Activated B cell treated with CpG ODN at 0.5 μM for 24 hours (primary cell): ENCODE measurements at regions of chr7 and their contacts with region 1.

Region 1: DNA sequence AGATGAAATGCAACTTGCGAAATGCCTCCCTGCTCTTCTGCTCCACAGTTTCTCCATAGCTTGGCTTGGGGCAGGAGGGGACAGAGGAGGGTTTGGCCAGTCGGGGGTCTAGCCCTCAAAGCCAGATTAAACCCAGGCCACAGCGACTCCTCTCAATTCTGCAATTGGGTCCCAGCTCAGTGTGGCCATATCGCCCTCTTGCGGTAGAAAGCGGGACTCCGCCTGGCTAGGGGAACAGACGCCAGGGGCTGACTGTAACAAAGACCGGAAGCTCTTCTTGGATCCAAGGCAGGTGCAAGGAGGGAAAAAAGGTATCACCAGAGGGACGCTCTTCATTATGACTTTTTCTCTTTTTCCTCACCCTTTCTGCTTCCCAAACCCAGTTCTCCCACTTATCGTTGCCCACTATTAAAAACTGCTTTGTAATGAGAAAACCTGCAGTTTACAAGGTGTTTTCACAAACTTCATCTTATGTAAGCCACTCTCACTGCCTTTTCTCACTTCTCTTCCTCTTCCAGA is 36.6 kb upstream of the TNPO3 start:
- DNase-seq: peak; percentile 90
- ATAC-seq: peak; percentile 85
- H3K4me3 Mint-ChIP-seq: peak overlapping the region; percentile 36
- H3K27ac Mint-ChIP-seq: peak overlapping the region; percentile 79
- H3K4me1 Mint-ChIP-seq: peaks cover 40% of the 10 kb centered on the region
- H3K27me3 Mint-ChIP-seq: no peaks in the 10 kb centered on the region
- CTCF ChIP-seq: peak; percentile 60

Region 2: DNA sequence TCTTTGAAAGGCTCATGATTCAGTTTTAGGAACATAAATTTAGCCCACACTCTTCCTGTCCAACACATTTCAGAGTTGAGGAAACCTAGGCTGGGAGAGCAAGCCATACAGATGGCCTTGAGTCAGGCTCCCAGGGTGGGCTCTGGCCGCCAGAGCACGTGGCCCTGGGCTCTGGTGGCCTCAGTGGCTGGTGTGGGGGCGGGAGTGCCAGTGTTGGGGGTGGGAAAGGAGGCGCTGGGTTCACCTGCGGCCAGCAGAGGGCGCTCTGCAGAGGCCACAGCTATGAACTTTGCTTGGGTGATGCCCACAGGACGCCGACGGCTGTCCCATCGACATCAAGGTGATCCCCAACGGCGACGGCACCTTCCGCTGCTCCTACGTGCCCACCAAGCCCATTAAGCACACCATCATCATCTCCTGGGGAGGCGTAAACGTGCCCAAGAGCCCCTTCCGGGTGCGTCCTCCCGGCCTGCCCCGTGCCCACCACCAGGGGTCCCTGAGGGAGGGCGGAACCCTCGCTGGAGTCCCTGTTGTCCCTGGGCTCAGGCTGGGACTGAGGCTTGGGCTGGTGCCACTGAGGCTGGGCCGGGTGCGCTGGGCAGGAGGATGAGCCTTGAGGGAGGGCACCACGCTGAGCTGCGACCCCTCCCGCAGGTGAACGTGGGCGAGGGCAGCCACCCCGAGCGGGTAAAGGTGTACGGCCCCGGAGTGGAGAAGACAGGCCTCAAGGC is 249.5 kb before region 1 on chr7:
- CTCF ChIA-PET with region 1: interaction called, 4 read pairs
- POLR2A ChIA-PET with region 1: no interaction called
- intact Hi-C with region 1: loop called (anchors 1 kb)
- DNase-seq: peak; percentile 49
- ATAC-seq: peak; percentile 67
- H3K4me3 Mint-ChIP-seq: no peak overlapping the region
- H3K27ac Mint-ChIP-seq: no peak overlapping the region
- H3K4me1 Mint-ChIP-seq: peaks cover 4% of the 10 kb centered on the region
- H3K27me3 Mint-ChIP-seq: peaks cover 2% of the 10 kb centered on the region
- CTCF ChIP-seq: peak; percentile 29

Region 3: DNA sequence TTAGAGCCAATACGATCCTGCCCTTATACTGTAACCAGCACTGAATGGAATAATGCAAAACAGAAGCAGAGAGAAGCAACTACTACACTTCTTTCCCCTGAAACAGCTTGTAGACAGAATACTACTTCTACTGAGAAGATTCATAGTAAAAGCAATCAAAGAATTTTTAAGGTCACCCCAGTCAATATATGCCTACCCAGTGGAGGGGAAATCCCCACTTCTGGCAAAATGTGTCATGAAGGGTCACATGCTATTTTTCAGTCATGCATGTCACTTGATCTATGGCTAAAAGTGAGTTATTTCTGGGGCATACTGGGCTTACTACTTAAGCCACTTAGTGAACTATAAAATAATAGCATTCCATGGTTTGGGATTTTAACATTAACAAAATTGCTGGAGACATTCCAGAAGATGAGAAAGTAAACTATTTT is 128.2 kb before region 1 on chr7:
- CTCF ChIA-PET with region 1: interaction called, 5 read pairs
- POLR2A ChIA-PET with region 1: interaction called, 3 read pairs
- intact Hi-C with region 1: loop called (anchors 2 kb)
- DNase-seq: no peak
- ATAC-seq: peak; percentile 91
- H3K4me3 Mint-ChIP-seq: peak overlapping the region; percentile 57
- H3K27ac Mint-ChIP-seq: peak overlapping the region; percentile 86
- H3K4me1 Mint-ChIP-seq: peaks cover 37% of the 10 kb centered on the region
- H3K27me3 Mint-ChIP-seq: no peaks in the 10 kb centered on the region
- CTCF ChIP-seq: no peak

Region 4: DNA sequence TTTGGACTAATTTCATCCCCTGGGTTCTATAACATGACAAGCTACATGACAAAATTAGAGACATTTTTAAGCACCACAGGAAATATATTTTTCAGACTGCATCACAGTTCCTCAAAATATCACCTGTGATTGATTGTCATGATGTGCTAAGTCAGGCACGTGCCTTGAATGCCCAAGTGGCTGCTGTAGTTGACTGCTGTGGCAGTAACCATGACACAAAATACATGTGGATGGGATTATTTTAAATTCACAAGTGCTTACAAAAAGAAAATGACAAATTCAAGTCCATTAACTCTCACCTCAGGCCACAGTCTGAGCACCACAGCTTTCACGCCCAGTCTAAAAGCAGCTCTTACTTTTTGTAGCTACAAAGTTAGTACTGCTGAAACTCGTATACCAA is 82.1 kb before region 1 on chr7:
- CTCF ChIA-PET with region 1: interaction called, 3 read pairs
- POLR2A ChIA-PET with region 1: no interaction called
- intact Hi-C with region 1: loop called (anchors 1 kb)
- DNase-seq: no peak
- ATAC-seq: peak; percentile 86
- H3K4me3 Mint-ChIP-seq: peak overlapping the region; percentile 17
- H3K27ac Mint-ChIP-seq: peak overlapping the region; percentile 82
- H3K4me1 Mint-ChIP-seq: peaks cover 43% of the 10 kb centered on the region
- H3K27me3 Mint-ChIP-seq: no peaks in the 10 kb centered on the region
- CTCF ChIP-seq: no peak

Region 5: DNA sequence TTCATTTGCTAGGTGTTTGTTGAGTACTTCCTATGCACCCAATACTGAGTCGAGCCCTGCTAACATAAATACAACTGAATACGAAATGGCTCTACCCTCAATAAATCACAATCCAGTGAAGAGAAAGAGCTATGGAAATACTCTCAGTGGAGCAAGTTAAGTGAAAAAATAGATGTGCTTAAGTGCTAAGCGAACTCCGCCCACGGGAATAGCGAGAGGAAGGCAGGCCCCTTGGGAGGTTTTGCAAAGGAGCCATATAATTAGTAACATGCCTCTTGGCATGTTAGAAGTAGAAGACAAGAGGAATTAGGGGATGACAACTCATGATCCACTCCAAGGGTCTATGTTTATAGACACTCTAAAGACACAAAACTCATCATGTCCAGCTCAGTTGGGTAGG is 10.2 kb after region 1 on chr7:
- CTCF ChIA-PET with region 1: interaction called, 18 read pairs
- POLR2A ChIA-PET with region 1: no interaction called
- intact Hi-C with region 1: no loop called
- DNase-seq: no peak
- ATAC-seq: no peak
- H3K4me3 Mint-ChIP-seq: no peak overlapping the region
- H3K27ac Mint-ChIP-seq: no peak overlapping the region
- H3K4me1 Mint-ChIP-seq: peaks cover 21% of the 10 kb centered on the region
- H3K27me3 Mint-ChIP-seq: no peaks in the 10 kb centered on the region
- CTCF ChIP-seq: no peak

Region 6: GRCh38 chr7:129136887-129137642 is 45.5 kb after region 1 on chr7:
- CTCF ChIA-PET with region 1: interaction called, 7 read pairs
- POLR2A ChIA-PET with region 1: interaction called, 10 read pairs
- intact Hi-C with region 1: loop called (anchors 1 kb)
- DNase-seq: no peak
- ATAC-seq: peak; percentile 90
- H3K4me3 Mint-ChIP-seq: peak overlapping the region; percentile 76
- H3K27ac Mint-ChIP-seq: peak overlapping the region; percentile 98
- H3K4me1 Mint-ChIP-seq: peaks cover 54% of the 10 kb centered on the region
- H3K27me3 Mint-ChIP-seq: no peaks in the 10 kb centered on the region
- CTCF ChIP-seq: no peak

Region 7: GRCh38 chr7:129163875-129164544 is 72.5 kb after region 1 on chr7:
- CTCF ChIA-PET with region 1: interaction called, 31 read pairs
- POLR2A ChIA-PET with region 1: interaction called, 9 read pairs
- intact Hi-C with region 1: loop called (anchors 1 kb)
- DNase-seq: no peak
- ATAC-seq: no peak
- H3K4me3 Mint-ChIP-seq: no peak overlapping the region
- H3K27ac Mint-ChIP-seq: peak overlapping the region; percentile 59
- H3K4me1 Mint-ChIP-seq: peaks cover 89% of the 10 kb centered on the region
- H3K27me3 Mint-ChIP-seq: no peaks in the 10 kb centered on the region
- CTCF ChIP-seq: peak; percentile 62